ENCODE measurements at regions of chr15 and their contacts with region 1.

Region 1: DNA sequence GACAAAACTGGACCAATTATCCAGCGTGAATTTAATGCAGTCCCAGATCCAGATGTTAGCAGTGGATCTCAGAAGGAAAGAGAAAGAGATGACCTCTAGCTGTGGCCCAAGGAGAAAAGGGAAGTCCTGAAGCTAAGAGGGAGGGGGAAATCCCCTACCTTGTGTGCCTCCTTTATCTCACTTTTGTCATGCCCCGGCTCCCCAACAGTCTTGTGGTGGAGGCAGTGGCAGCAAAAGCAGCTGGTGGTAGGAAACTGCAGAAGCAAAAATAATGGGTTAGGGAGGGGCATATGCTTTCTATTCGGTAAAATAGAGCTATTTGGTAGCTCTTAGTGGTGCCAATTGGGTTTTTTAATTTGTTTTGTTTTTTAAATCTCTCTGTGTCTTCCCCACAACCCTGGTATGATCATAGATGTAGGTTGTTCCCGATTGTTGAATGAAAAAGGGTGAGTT is 56.5 kb downstream of the MCTP2 start:
- DNase-seq: no peak
- ATAC-seq: peak in 2 of 4 donors; percentile 55 to 76
- H3K4me3 ChIP-seq: no peak overlapping the region
- H3K27ac ChIP-seq: no peak overlapping the region
- H3K4me1 ChIP-seq: peaks cover 3 to 5% (median 3%) of the 10 kb centered on the region in 3 donors
- H3K27me3 ChIP-seq: no peaks in the 10 kb centered on the region
- CTCF ChIP-seq: no peak

Region 2: DNA sequence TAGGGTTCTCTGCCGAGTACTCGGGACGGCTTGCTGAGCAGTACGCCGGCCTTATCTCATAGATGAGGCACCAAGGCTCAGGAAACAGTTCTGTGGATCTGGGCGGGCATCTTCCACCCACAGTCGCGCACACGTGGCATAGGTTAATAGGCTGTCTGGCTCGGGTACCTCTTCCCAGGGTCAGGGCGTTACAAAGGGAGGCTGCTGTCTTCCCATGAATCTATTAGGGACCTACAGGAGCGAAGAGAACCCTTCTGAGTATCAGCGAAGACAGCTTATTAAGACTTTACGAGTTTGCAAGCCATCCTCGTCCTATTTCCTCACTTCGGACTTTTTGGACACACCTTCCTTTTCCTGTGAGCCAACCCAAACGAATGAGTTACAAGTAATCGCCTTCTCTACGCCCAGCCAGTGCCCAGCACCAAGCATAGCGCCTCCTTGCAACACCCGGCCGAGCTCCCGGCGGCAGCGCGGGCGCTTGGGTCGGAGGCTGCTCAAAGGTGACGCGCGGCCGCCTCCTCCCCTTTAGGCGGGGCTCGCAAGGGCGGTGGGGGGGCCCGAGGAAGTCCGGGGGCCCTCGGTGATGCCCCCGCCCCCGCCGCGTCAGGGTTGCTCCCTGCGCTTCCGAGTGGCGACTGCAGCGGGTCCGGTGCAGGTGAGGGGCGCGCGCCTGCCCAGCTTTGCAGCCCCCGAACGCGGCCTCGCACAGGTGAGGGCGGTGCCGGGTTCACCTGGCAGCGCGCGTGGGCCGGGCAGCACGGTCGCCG is 56.7 kb before region 1 on chr15 and contains the start of gene MCTP2:
- intact Hi-C with region 1: loop called in 1 of 3 experiments (anchors 10 kb)
- DNase-seq: peak; percentile 88 to 96 (median 90)
- ATAC-seq: peak; percentile 93 to 96 (median 96)
- H3K4me3 ChIP-seq: peak within 1 kb of the TSS; percentile 71 to 84 (median 82)
- H3K27ac ChIP-seq: peak within 1 kb of the TSS; percentile 85 to 94 (median 89)
- H3K4me1 ChIP-seq: peaks cover 11 to 16% (median 15%) of the 10 kb centered on the region in 3 donors
- H3K27me3 ChIP-seq: no peaks in the 10 kb centered on the region
- CTCF ChIP-seq: no peak
- total RNA-seq, gene MCTP2: 13.0 to 21.4 (median 15.0) TPM